A549 (cell line): ENCODE measurements at regions of chr15 and their contacts with region 1.

Region 1: DNA sequence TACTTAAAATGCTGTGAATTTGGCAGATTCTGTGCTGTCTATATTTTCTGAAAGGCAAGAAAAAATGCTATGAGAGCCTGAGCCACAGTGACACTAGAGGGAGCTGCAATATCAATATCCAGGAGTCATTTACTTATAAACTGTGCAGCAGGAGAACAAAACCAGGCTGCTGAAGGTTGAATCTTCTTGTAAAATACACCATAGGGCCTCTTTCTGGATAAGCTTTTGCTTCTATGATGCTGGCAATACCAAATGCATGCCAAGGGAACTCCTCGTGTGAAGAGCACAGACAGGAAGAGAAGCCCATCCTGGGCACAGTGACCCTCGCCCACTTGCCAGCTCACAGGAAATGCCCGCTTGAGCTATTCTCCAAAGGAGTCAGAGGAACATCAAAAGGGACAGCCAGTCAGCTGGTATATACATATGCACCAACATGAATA is 48.0 kb upstream of the TSPAN3 start:
- DNase-seq: peak; percentile 64 to 74
- ATAC-seq: peak; percentile 83 to 93
- H3K4me3 ChIP-seq: no peak overlapping the region
- H3K27ac ChIP-seq: no peak overlapping the region
- H3K4me1 ChIP-seq: no peaks in the 10 kb centered on the region
- CTCF ChIP-seq: peak; percentile 96
- EP300 ChIP-seq: no peak
- POLR2A ChIP-seq: no peak
- RAD21 ChIP-seq: peak; percentile 93

Region 2: DNA sequence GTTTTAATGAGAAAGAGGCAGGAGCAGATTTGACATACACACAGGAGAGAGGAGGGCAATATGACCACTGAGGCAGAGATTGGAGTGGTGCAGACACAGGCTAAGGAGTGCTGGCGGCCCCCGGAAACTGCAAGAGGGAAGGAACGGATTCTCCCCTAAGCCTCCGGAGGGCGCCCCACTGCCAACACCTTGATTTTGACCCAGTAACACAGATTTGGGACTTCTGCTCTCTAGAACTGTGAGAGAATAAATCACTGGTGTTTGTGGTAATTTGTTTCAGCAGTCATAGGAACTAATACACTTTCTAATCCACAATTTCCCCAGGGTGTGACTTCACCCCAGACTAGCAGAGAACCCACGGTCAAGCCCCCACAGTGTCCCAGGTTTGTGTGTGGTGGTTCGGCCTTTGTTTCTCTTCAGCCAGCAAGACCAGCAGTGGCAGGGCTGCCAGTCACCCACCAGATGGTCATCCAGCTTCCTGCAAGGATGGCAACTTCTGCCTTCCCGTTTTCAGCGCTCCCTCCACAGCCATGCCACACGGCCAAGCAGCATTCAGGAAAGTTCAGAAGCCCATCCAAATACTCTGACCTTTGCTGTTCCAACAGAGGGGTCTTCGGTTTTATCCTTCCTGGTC is 24.4 kb before region 1 on chr15:
- CTCF ChIA-PET with region 1: interaction called, 11 read pairs
- POLR2A ChIA-PET with region 1: no interaction called
- DNase-seq: no peak
- ATAC-seq: peak in 1 of 2 experiments; percentile 65; a peak in 3 of 6 replicates
- H3K4me3 ChIP-seq: no peak overlapping the region
- H3K27ac ChIP-seq: no peak overlapping the region
- H3K4me1 ChIP-seq: no peaks in the 10 kb centered on the region
- CTCF ChIP-seq: no peak; the same call in 2 of the 3 replicates
- EP300 ChIP-seq: no peak
- POLR2A ChIP-seq: no peak
- RAD21 ChIP-seq: peak in 1 of 2 experiments; percentile 27; a peak in 1 of 5 replicates

Region 3: DNA sequence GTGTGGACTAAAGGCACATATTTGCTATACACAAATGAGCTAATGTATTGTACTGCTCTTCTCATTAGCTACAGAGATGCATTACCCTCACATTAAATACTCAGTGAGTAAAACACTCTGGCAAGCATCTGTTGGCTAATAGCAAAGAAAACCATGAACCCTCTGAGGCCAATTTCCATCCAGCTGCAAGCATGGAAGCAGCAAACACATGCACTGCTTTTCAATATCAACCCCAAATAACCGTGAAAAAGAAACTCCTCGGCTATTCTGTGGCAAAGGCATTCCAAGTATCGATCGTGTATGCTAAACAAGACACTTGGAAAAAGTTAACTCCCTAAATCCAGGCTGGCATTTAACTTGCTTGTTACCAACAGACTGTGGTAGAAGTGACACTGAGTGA is 234.0 kb after region 1 on chr15:
- CTCF ChIA-PET with region 1: no interaction called
- POLR2A ChIA-PET with region 1: no interaction called
- DNase-seq: no peak
- ATAC-seq: no peak
- H3K4me3 ChIP-seq: no peak overlapping the region
- H3K27ac ChIP-seq: no peak overlapping the region
- H3K4me1 ChIP-seq: peaks cover 13% of the 10 kb centered on the region
- CTCF ChIP-seq: no peak
- EP300 ChIP-seq: no peak
- POLR2A ChIP-seq: no peak
- RAD21 ChIP-seq: no peak